Activated naive CD8-positive, alpha-beta T cell treated with anti-CD3 and anti-CD28 coated beads, Interleukin-2, amount 10 ng/mL, durations not matched to agents 7 days and 5 days (primary cell): ENCODE measurements at regions of chr6 and their contacts with region 1.

Region 1: DNA sequence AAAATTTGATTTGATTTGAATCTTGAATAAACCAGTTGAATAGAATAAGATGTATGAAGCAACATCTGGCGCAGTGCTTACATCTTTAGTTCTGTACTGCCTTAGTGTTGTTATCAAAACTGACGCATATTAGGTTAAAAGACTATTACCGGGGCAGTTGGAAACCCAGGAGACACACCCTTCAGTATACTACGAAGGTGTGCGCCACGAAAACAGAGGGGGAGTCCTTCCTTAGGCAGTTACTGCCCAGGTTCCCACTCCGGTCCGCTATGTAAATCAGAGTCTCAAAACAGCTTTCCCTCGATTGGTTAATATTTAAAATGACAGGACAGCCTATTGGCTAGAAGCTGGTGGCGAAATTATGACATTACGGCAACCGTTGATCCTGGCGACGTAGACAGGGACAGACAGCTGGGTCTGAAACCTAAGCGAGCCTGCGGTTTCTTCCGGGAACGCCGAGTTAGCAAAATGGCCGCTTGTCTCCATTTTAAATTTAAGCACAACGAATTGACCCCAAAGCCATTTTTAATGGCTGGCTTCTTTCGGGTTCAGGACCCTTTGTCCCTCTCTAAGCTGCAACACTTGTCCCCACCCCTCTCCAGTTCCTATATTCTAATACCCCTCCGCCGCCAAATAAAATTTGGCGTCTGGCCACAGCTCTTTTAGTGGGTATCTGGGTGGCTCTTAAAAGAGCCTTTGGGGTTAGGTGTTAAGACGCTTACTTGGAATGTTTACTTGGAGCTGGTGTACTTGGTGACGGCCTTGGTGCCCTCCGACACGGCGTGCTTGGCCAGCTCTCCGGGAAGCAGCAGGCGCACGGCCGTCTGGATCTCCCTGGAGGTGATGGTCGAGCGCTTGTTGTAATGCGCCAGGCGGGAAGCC is 35.8 kb downstream of the HFE start:
- DNase-seq: peak; percentile 76
- ATAC-seq: peak; percentile 58
- H3K4me3 Mint-ChIP-seq: peak overlapping the region; percentile 99
- H3K27ac Mint-ChIP-seq: peak overlapping the region; percentile 100
- H3K4me1 Mint-ChIP-seq: peaks cover 40% of the 10 kb centered on the region
- H3K27me3 Mint-ChIP-seq: no peaks in the 10 kb centered on the region

Region 2: GRCh38 chr6:26031595-26032339 is 91.3 kb before region 1 on chr6:
- POLR2A ChIA-PET with region 1: interaction called, 176 read pairs
- DNase-seq: peak; percentile 84
- ATAC-seq: peak; percentile 66
- H3K4me3 Mint-ChIP-seq: peak overlapping the region; percentile 88
- H3K27ac Mint-ChIP-seq: peak overlapping the region; percentile 98
- H3K4me1 Mint-ChIP-seq: peaks cover 66% of the 10 kb centered on the region
- H3K27me3 Mint-ChIP-seq: peaks cover 3% of the 10 kb centered on the region

Region 3: DNA sequence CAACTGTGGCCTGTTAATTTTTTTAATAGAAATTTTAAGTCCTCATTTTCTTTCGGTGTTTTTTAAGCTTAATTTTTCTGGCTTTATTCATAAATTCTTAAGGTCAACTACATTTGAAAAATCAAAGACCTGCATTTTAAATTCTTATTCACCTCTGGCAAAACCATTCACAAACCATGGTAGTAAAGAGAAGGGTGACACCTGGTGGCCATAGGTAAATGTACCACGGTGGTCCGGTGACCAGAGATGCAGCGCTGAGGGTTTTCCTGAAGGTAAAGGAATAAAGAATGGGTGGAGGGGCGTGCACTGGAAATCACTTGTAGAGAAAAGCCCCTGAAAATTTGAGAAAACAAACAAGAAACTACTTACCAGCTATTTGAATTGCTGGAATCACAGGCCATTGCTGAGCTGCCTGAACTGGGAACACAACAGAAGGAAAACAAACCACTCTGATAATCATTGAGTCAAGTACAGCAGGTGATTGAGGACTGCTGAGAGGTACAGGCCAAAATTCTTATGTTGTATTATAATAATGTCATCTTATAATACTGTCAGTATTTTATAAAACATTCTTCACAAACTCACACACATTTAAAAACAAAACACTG is 25.7 kb before region 1 on chr6:
- POLR2A ChIA-PET with region 1: interaction called, 252 read pairs
- DNase-seq: no peak
- ATAC-seq: peak; percentile 72
- H3K4me3 Mint-ChIP-seq: no peak overlapping the region
- H3K27ac Mint-ChIP-seq: no peak overlapping the region
- H3K4me1 Mint-ChIP-seq: peaks cover 14% of the 10 kb centered on the region
- H3K27me3 Mint-ChIP-seq: peaks cover 5% of the 10 kb centered on the region

Region 4: GRCh38 chr6:26163427-26164119 is 40.5 kb after region 1 on chr6:
- POLR2A ChIA-PET with region 1: interaction called, 2,352 read pairs
- DNase-seq: no peak
- ATAC-seq: no peak
- H3K4me3 Mint-ChIP-seq: peak overlapping the region; percentile 61
- H3K27ac Mint-ChIP-seq: peak overlapping the region; percentile 77
- H3K4me1 Mint-ChIP-seq: peaks cover 63% of the 10 kb centered on the region
- H3K27me3 Mint-ChIP-seq: no peaks in the 10 kb centered on the region

Region 5: GRCh38 chr6:26216356-26216885 is 93.4 kb after region 1 on chr6:
- POLR2A ChIA-PET with region 1: interaction called, 119 read pairs
- DNase-seq: peak; percentile 77
- ATAC-seq: peak; percentile 75
- H3K4me3 Mint-ChIP-seq: no peak overlapping the region
- H3K27ac Mint-ChIP-seq: no peak overlapping the region
- H3K4me1 Mint-ChIP-seq: peaks cover 32% of the 10 kb centered on the region
- H3K27me3 Mint-ChIP-seq: no peaks in the 10 kb centered on the region

Region 6: DNA sequence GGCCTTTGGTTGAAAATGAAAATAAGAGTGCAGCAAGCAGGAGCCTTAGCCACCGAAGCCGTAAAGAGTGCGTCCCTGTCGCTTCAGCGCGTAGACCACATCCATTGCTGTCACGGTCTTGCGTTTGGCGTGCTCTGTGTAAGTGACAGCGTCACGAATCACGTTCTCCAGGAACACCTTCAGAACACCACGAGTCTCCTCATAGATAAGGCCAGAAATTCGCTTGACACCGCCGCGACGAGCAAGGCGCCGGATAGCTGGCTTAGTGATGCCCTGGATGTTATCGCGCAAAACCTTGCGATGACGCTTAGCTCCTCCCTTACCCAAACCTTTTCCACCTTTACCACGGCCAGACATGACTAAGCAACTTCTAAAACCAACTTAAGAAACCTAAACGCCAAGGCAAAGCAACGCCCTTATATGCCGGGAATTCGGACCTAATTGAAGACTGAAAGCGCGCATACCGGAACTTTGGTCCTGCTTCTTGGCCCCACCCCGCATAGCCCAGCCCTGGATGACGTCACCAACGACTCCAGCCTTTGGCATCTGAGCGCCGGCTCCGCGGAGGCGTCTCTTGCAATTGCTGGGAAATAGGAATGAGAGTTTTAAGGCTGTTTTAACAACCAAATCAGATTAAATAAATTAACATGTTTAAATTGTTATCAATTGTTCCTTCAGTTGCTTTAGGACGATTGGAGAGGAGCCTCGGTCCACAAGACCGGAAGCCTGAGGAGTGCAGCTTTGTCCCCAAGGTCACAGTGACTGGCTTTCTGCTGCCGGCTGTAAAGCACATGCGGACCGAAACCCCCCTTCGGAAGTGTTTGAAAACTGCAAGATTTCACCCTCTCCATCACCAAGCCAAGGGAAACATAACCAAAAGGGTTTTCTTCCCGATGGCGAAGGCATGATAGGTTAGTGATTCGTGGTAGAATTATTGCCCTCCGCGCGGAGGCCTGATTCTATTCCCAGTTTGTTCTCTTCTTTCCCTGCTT is 162.4 kb after region 1 on chr6:
- POLR2A ChIA-PET with region 1: interaction called, 23 read pairs
- DNase-seq: peak; percentile 87
- ATAC-seq: peak; percentile 79
- H3K4me3 Mint-ChIP-seq: peak overlapping the region; percentile 72
- H3K27ac Mint-ChIP-seq: peak overlapping the region; percentile 92
- H3K4me1 Mint-ChIP-seq: peaks cover 37% of the 10 kb centered on the region
- H3K27me3 Mint-ChIP-seq: peaks cover 3% of the 10 kb centered on the region

Region 7: GRCh38 chr6:27838058-27838944 is 1715.3 kb after region 1 on chr6:
- POLR2A ChIA-PET with region 1: interaction called, 26 read pairs
- DNase-seq: peak; percentile 84
- ATAC-seq: peak; percentile 74
- H3K4me3 Mint-ChIP-seq: no peak overlapping the region
- H3K27ac Mint-ChIP-seq: no peak overlapping the region
- H3K4me1 Mint-ChIP-seq: peaks cover 26% of the 10 kb centered on the region
- H3K27me3 Mint-ChIP-seq: peaks cover 2% of the 10 kb centered on the region